Activated B cell treated with CpG ODN at 0.5 μM for 24 hours (primary cell): ENCODE measurements at regions of chr1 and their contacts with region 1.

Region 1: DNA sequence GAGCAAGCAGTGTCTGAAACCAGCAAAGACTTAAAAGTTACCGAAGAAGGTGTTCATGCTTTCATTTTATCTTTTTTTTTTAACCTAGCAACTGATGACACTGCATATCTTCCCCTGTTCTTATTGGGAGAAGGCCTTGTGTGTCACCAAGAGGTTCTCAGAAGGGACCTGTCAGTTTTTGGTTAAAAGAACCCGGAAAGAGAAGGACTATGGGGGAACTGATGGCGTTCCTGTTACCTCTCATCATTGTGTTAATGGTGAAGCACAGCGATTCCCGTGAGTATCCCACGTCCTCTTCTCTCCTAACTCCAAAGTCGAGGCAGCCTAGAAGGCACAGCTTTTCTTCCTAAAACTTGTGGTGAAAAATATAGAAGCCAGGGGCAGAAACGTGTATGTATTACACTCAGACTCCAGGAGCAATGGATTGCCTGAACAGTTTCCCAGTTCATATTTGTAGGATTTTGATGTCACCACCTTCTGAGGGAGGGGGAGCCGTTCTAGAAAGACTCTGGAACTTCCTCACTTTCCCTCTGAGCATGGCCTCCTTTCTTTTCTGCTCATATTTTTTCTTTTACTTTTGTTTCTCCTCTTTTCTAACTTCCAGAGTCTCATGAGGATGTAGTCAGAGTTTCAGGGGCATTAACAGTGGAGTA is at the start of gene MR1:
- DNase-seq: no peak
- ATAC-seq: peak; percentile 96
- H3K4me3 Mint-ChIP-seq: peak within 1 kb of the TSS; percentile 98
- H3K27ac Mint-ChIP-seq: peak within 1 kb of the TSS; percentile 99
- H3K4me1 Mint-ChIP-seq: peaks cover 60% of the 10 kb centered on the region
- H3K27me3 Mint-ChIP-seq: no peaks in the 10 kb centered on the region
- CTCF ChIP-seq: no peak
- total RNA-seq, gene MR1: 24.3 and 24.8 TPM in 2 replicates

Region 2: GRCh38 chr1:180881806-180882509 is 152.0 kb before region 1 on chr1:
- CTCF ChIA-PET with region 1: interaction called, 8 read pairs
- POLR2A ChIA-PET with region 1: interaction called, 3 read pairs
- intact Hi-C with region 1: loop called (anchors 5 kb)
- DNase-seq: no peak
- ATAC-seq: no peak
- H3K4me3 Mint-ChIP-seq: no peak overlapping the region
- H3K27ac Mint-ChIP-seq: no peak overlapping the region
- H3K4me1 Mint-ChIP-seq: no peaks in the 10 kb centered on the region
- H3K27me3 Mint-ChIP-seq: no peaks in the 10 kb centered on the region
- CTCF ChIP-seq: no peak

Region 3: DNA sequence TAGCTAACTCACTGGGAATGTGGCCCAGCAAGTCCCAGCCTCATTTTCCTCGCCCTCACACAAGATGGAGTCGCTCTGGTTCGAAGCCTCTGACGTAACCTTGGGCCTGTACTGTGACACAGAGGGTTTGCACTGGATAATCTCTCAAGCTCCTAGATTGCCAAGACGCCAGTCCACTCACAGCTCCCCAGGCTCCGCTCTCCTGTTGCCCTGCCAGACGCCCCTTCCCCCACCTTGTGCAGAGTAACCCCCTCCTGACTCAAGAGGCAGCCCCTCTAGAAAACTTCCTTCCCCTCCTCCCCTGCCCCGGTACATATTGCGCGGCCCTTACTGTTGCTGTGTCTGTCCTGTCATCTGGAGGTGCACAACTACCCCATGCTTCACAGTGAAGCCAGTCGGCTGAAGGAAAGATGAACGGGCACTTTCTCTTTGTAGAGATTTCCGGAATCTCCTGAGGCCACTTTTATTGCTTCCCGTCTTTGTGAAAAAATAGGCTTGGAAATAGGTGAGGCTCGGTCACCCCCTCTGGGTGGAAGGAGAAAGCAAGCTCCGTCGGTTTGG is 122.2 kb before region 1 on chr1:
- CTCF ChIA-PET with region 1: no interaction called
- POLR2A ChIA-PET with region 1: no interaction called
- intact Hi-C with region 1: no loop called
- DNase-seq: no peak
- ATAC-seq: no peak
- H3K4me3 Mint-ChIP-seq: peak overlapping the region; percentile 63
- H3K27ac Mint-ChIP-seq: no peak overlapping the region
- H3K4me1 Mint-ChIP-seq: peaks cover 15% of the 10 kb centered on the region
- H3K27me3 Mint-ChIP-seq: peaks cover 36% of the 10 kb centered on the region
- CTCF ChIP-seq: no peak